A673 (cell line): ENCODE measurements at regions of chr17 and their contacts with region 1.

Region 1: GRCh38 chr17:32349854-32350665 is at the start of gene ZNF207:
- DNase-seq: peak; percentile 93
- H3K4me3 ChIP-seq: peak within 1 kb of the TSS; percentile 69
- H3K27ac ChIP-seq: peak within 1 kb of the TSS; percentile 94
- H3K4me1 ChIP-seq: peaks cover 10% of the 10 kb centered on the region
- H3K27me3 ChIP-seq: no peaks in the 10 kb centered on the region
- CTCF ChIP-seq: no peak
- total RNA-seq, gene ZNF207: 177 and 178 TPM in 2 replicates

Region 2: GRCh38 chr17:32222620-32223019 is 127.4 kb before region 1 on chr17:
- CTCF ChIA-PET with region 1: no interaction called
- POLR2A ChIA-PET with region 1: interaction called, 12 read pairs
- intact Hi-C with region 1: no loop called
- DNase-seq: no peak
- H3K4me3 ChIP-seq: no peak overlapping the region
- H3K27ac ChIP-seq: no peak overlapping the region
- H3K4me1 ChIP-seq: no peaks in the 10 kb centered on the region
- H3K27me3 ChIP-seq: no peaks in the 10 kb centered on the region
- CTCF ChIP-seq: no peak

Region 3: GRCh38 chr17:32444308-32445073 is 94.4 kb after region 1 on chr17 and contains the start of gene PSMD11:
- CTCF ChIA-PET with region 1: no interaction called
- POLR2A ChIA-PET with region 1: no interaction called
- intact Hi-C with region 1: loop called (anchors 10 kb)
- DNase-seq: peak; percentile 95
- H3K4me3 ChIP-seq: peak within 1 kb of the TSS; percentile 87
- H3K27ac ChIP-seq: peak within 1 kb of the TSS; percentile 94
- H3K4me1 ChIP-seq: peaks cover 11% of the 10 kb centered on the region
- H3K27me3 ChIP-seq: no peaks in the 10 kb centered on the region
- CTCF ChIP-seq: peak; percentile 87; the same call in 1 of the 2 replicates
- total RNA-seq, gene PSMD11: 195 and 213 TPM in 2 replicates